ENCODE measurements at regions of chr16 and their contacts with region 1.

Region 1: GRCh38 chr16:67546761-67547422 is 15.4 kb upstream of the CTCF start:
- DNase-seq: peak; percentile 73
- ATAC-seq: no peak
- H3K4me3 Mint-ChIP-seq: peak overlapping the region; percentile 58
- H3K27ac Mint-ChIP-seq: peak overlapping the region; percentile 95
- H3K4me1 Mint-ChIP-seq: peaks cover 87% of the 10 kb centered on the region
- H3K27me3 Mint-ChIP-seq: no peaks in the 10 kb centered on the region
- CTCF ChIP-seq: peak; percentile 95

Region 2: DNA sequence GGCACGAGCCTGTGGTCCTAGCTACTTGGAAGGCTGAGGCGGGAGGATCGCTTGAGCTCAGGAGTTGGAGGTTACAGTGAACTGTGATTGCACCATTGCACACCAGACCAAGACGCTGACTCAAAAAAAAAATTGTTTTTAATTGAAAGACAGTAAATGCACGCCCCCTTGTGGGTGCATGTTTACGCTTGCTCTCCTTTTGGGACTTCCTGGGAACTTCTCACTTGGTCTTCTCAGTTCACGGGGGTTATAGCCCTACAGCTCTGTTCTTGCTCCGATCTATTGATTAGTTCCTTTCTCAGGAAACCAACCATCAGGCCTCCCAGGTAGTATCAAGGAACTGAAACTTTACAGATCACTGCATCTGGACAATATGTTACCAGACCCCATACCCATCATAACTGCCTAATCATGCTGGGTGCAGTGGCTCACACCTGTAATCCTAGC is 32.5 kb before region 1 on chr16:
- CTCF ChIA-PET with region 1: interaction called, 4 read pairs
- POLR2A ChIA-PET with region 1: interaction called, 27 read pairs
- intact Hi-C with region 1: no loop called
- DNase-seq: no peak
- ATAC-seq: peak; percentile 23
- H3K4me3 Mint-ChIP-seq: peak overlapping the region; percentile 60
- H3K27ac Mint-ChIP-seq: peak overlapping the region; percentile 94
- H3K4me1 Mint-ChIP-seq: peaks cover 73% of the 10 kb centered on the region
- H3K27me3 Mint-ChIP-seq: no peaks in the 10 kb centered on the region
- CTCF ChIP-seq: no peak

Region 3: DNA sequence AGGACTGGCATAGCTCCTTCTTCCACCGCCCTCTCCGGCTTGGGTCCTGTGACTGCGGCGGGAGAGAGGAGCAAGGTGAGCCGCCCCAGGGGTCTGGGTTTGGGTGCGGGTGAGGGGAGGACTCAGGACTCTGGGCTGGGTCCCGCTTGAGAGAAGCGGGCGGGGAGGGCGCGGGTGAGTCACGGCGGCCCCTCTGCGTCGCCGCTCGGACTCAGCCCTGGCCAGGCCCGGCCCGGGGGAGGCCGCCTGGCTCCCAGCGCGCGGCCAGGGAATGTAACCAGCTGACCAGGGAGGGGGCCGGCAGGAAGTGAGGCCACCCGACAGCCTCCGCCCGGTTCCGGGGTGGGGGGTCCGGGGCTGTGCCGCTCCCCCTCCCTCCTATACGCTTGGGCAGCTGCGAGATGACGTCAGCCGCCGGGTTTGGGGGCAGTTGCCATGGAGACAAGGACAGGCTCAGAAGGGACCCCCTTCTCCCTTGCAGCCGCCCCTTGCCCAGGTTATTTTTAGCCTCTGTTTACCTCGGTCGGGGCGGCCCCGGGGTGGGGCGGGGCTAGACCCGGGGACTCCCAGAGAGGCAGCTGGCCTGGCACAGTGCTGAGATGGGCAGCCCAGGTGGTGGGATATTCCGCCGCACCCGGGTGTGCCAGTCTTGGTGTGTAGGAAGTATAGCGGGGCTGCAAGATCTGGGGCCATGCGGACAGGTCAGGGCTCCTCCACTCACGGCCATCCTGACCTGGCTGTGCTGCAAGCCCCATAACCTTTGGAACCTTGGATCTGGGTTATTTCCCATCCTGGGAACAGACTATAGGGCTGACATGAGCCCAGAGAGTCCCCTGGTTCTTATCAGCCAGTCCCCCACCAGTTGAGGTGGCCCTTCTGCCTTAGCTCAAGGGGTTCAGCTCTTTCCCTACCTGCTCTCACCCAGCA is 16.6 kb before region 1 on chr16:
- CTCF ChIA-PET with region 1: interaction called, 50 read pairs
- POLR2A ChIA-PET with region 1: interaction called, 77 read pairs
- intact Hi-C with region 1: no loop called
- DNase-seq: peak; percentile 81
- ATAC-seq: peak; percentile 65
- H3K4me3 Mint-ChIP-seq: peak overlapping the region; percentile 90
- H3K27ac Mint-ChIP-seq: peak overlapping the region; percentile 95
- H3K4me1 Mint-ChIP-seq: peaks cover 61% of the 10 kb centered on the region
- H3K27me3 Mint-ChIP-seq: no peaks in the 10 kb centered on the region
- CTCF ChIP-seq: no peak

Region 4: GRCh38 chr16:67726106-67727034 is 179.5 kb after region 1 on chr16:
- CTCF ChIA-PET with region 1: no interaction called
- POLR2A ChIA-PET with region 1: no interaction called
- intact Hi-C with region 1: no loop called
- DNase-seq: no peak
- ATAC-seq: no peak
- H3K4me3 Mint-ChIP-seq: no peak overlapping the region
- H3K27ac Mint-ChIP-seq: no peak overlapping the region
- H3K4me1 Mint-ChIP-seq: peaks cover 5% of the 10 kb centered on the region
- H3K27me3 Mint-ChIP-seq: no peaks in the 10 kb centered on the region
- CTCF ChIP-seq: no peak